OCI-LY7 (cell line): ENCODE measurements at regions of chr14 and their contacts with region 1.

Region 1: GRCh38 chr14:101964297-101965144 is at the start of gene DYNC1H1:
- DNase-seq: peak; percentile 95
- H3K4me3 ChIP-seq: peak within 1 kb of the TSS; percentile 97
- H3K27ac ChIP-seq: peak within 1 kb of the TSS; percentile 61
- H3K4me1 ChIP-seq: peaks cover 30% of the 10 kb centered on the region
- CTCF ChIP-seq: no peak
- total RNA-seq, gene DYNC1H1: 207 and 209 TPM in 2 replicates

Region 2: GRCh38 chr14:101774006-101774795 is 190.3 kb before region 1 on chr14:
- CTCF ChIA-PET with region 1: no interaction called
- POLR2A ChIA-PET with region 1: interaction called, 3 read pairs
- intact Hi-C with region 1: loop called (anchors 2 kb)
- DNase-seq: peak; percentile 95
- H3K4me3 ChIP-seq: peak overlapping the region; percentile 49
- H3K27ac ChIP-seq: peak overlapping the region; percentile 96
- H3K4me1 ChIP-seq: peaks cover 85% of the 10 kb centered on the region
- CTCF ChIP-seq: no peak

Region 3: GRCh38 chr14:101992708-101993107 is 28.2 kb after region 1 on chr14:
- CTCF ChIA-PET with region 1: interaction called, 7 read pairs
- POLR2A ChIA-PET with region 1: interaction called, 3 read pairs
- intact Hi-C with region 1: loop called (anchors 2 kb)
- DNase-seq: peak; percentile 82
- H3K4me3 ChIP-seq: no peak overlapping the region
- H3K27ac ChIP-seq: peak overlapping the region; percentile 45
- H3K4me1 ChIP-seq: peaks cover 21% of the 10 kb centered on the region
- CTCF ChIP-seq: peak; percentile 62

Region 4: DNA sequence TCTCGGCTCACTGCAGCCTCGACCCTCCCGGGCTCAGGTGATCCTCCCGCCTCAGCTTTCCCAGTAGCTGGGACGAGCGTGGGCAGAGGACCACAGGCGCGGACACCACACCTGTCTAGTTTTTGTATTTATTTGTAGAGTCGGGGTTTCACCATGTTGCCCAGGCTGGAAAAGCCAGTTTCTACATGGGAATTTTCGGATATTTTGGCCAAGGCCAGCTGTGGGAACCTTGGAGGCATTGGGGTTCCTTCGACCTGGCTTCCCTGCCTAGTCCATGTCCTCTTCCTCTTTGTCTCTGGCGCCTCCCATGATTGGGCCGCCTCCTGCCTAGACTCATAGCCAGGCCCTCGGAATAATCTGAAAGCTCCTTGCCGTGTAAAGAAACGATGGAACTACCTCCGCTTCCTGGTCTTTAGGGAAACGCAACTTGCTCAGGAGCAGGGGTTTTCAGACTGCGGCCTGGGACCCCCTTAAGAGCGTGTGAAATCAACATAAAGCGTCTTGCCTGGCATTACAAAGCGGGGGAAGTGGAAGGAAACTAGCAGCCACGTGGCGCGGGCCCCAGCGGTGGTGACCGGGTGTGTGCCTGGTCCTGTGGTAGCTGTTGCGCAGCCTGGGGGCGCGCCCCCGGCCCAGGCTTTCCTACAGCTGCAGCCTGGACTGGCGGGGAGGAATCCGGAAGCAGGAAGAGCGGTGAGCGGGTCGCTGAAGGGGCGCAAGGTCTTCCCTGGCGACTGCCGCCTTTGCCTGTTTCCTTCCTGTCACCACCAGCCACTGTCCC is 123.7 kb after region 1 on chr14:
- CTCF ChIA-PET with region 1: no interaction called
- POLR2A ChIA-PET with region 1: interaction called, 4 read pairs
- intact Hi-C with region 1: loop called (anchors 2 kb)
- DNase-seq: peak; percentile 65
- H3K4me3 ChIP-seq: peak overlapping the region; percentile 93
- H3K27ac ChIP-seq: peak overlapping the region; percentile 66
- H3K4me1 ChIP-seq: peaks cover 42% of the 10 kb centered on the region
- CTCF ChIP-seq: no peak